Activated CD4-positive, alpha-beta T cell treated with anti-CD3 and anti-CD28 coated beads for 36 hours (primary cell): ENCODE measurements at regions of chr16 and their contacts with region 1.

Region 1: DNA sequence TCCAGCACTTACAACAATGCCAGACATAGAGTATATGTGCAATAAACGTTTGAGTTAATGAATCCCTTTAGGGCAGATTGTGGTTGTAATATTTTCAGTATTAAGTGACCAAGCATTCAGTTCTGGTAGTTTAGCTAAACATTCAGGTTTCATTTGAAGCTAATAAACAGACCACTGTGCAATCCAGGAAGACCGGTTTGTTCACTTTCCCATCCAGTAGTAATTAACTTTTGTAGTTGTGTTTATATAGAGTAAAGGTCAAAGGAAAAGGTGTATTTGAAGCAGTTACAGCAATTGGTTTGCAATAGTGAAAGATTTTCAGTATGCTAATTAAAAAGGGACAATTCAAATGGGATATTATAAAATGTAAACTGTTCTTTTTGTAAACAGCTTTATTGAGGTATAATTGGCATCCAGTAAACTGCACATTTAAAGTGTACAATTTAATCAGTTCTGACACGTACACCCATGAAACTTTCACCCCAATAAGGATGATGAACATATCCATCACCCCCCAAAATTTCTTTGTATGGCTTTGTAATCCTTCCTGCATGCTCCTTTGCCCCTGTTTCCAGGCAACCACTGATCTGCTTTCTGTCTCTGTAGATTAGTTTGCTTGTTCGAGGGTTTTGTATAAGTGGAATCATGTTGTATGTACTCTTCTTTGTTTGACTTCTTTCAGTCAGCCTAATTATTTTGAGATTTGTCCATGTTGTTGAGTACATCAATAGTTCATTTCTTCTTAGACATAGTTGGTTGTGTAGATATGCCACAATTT is 26.3 kb downstream of the MRTFB start:
- DNase-seq: no peak
- ATAC-seq: no peak
- H3K4me3 Mint-ChIP-seq: no peak overlapping the region
- H3K27ac Mint-ChIP-seq: no peak overlapping the region
- H3K4me1 Mint-ChIP-seq: peaks cover 25% of the 10 kb centered on the region
- H3K27me3 Mint-ChIP-seq: no peaks in the 10 kb centered on the region

Region 2: DNA sequence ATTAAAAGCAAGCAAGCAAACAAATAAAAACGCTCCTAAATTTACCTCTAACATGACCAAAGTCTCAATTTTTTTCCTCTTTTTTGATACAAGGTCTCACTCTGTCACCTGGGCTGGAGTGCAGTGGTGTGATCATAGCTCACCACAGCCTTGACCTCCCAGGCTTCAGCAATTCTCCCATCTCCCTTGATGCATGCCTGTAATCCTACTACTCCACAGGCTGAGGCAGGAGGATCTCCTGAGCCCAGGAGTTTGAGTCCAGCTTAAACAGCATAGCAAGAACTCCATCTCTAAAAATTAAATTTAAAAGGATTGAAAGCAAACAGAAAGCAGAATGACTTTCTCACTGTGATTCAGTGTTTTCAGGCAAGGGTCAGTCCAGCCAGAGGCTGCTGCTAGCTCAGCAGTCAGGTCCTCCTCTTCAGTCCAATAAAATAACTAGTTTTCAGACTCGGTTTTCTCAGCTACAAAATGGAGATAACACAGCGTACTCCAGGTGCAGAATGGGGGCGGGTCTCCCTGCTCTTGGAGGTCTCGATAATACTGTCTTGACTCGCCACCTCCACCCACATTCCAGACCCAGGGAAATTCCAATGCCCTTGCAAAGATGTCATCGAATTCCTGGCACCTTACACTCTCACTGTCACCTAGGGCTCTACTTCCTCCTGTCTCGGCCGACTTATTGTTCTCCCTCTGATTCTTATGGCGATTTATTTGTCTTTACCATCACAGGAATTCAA is 46.9 kb before region 1 on chr16:
- CTCF ChIA-PET with region 1: no interaction called
- POLR2A ChIA-PET with region 1: no interaction called
- intact Hi-C with region 1: loop called in 1 of 2 experiments (anchors 5 kb)
- DNase-seq: no peak
- ATAC-seq: no peak
- H3K4me3 Mint-ChIP-seq: no peak overlapping the region
- H3K27ac Mint-ChIP-seq: no peak overlapping the region
- H3K4me1 Mint-ChIP-seq: no peaks in the 10 kb centered on the region
- H3K27me3 Mint-ChIP-seq: no peaks in the 10 kb centered on the region

Region 3: GRCh38 chr16:14151256-14152030 is 54.1 kb after region 1 on chr16:
- CTCF ChIA-PET with region 1: interaction called, 3 read pairs
- POLR2A ChIA-PET with region 1: no interaction called
- intact Hi-C with region 1: loop called in 1 of 2 experiments (anchors 10 kb)
- DNase-seq: no peak
- ATAC-seq: no peak
- H3K4me3 Mint-ChIP-seq: no peak overlapping the region
- H3K27ac Mint-ChIP-seq: no peak overlapping the region
- H3K4me1 Mint-ChIP-seq: no peaks in the 10 kb centered on the region
- H3K27me3 Mint-ChIP-seq: no peaks in the 10 kb centered on the region